Transverse colon (tissue), 4 donors: ENCODE measurements at regions of chr7 and their contacts with region 1.

Region 1: DNA sequence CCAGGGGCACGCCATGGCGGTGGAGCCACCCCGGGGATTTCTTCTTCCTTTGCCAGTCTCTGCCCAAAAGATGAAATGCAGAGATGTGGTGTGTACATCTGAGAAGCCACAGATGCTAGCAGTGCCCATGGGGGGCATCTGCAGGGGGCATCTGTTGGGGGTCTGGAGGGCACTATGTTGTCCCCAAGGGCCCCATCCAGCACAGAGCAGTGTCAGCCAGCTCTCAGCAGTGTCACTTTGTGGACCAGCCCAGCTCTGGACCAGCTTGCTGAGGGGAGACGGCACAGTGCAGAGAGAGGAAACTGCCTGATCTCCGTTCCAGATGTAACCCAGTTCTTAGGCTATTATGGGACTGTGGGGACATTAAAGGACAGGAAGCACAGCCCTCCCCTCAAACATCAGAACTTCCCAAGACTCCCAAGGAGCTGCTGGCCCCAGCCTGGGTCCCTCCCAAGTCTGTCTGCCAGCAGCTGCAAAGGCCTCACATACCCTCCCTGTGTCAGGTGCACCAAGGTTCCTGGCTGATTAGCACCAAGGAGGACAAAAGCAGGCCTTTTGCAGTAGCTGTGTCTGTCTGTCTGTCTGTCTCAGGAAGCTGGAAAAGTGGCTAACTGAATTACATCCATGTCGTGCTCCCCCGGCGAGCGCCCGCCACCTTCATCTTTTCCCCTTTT is 536.5 kb downstream of the PTPRN2 start:
- DNase-seq: no peak
- H3K4me3 ChIP-seq: no peak overlapping the region
- H3K27ac ChIP-seq: no peak overlapping the region
- H3K4me1 ChIP-seq: no peaks in the 10 kb centered on the region
- H3K27me3 ChIP-seq: no peaks in the 10 kb centered on the region
- CTCF ChIP-seq: no peak
- EP300 ChIP-seq: no peak
- POLR2A ChIP-seq: no peak

Region 2: GRCh38 chr7:157961731-157962457 is 89.2 kb before region 1 on chr7:
- in situ Hi-C with region 1: no loop called
- intact Hi-C with region 1: no loop called
- DNase-seq: no peak
- H3K4me3 ChIP-seq: no peak overlapping the region
- H3K27ac ChIP-seq: no peak overlapping the region
- H3K4me1 ChIP-seq: no peaks in the 10 kb centered on the region
- H3K27me3 ChIP-seq: peaks cover 22% of the 10 kb centered on the region
- CTCF ChIP-seq: no peak
- EP300 ChIP-seq: no peak
- POLR2A ChIP-seq: no peak

Region 3: GRCh38 chr7:158010961-158011679 is 40.0 kb before region 1 on chr7:
- in situ Hi-C with region 1: no loop called
- intact Hi-C with region 1: no loop called
- DNase-seq: no peak
- H3K4me3 ChIP-seq: no peak overlapping the region
- H3K27ac ChIP-seq: no peak overlapping the region
- H3K4me1 ChIP-seq: peaks cover 0 to 9% (median 8%) of the 10 kb centered on the region in 4 donors
- H3K27me3 ChIP-seq: no peaks in the 10 kb centered on the region
- CTCF ChIP-seq: no peak
- EP300 ChIP-seq: no peak
- POLR2A ChIP-seq: no peak

Region 4: DNA sequence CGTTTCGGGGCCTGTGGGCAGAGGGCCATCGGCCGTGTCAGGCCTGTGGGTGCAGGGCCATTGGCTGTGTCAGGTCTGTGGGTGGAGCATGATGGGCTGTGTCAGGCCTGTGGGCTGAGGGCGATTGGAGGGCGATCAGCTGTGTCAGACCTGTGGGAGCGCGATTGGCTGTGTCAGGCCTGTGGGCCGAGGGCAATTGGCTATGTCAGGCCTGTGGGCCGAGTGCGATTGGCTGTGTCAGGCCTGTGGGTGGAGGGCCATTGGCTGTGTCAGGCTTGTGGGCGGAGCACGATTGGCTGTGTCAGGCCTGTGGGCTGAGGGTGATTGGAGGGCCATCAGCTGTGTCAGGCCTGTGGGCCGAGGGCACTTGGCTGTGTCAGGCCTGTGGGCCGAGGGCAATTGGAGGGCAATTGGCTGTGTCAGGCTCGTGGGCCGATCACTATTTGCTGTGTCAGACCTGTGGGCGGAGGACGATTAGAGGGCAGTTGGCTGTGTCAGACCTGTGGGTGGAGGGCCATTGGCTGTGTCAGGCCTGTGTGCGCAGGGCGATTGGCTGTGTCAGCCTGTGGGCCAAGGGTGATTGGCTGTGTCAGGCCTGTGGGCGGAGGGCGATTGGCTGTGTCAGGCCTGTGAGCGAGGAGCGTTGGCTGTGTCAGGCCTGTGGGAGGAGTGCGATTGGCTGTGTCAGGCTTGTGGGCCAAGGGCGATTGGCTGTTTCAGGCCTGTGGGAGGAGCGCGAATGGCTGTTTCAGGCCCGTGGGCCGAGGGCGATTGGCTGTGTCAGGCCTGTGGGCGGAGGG is 859.3 kb after region 1 on chr7:
- in situ Hi-C with region 1: no loop called
- intact Hi-C with region 1: loop called (anchors 10 kb)
- DNase-seq: no peak
- H3K4me3 ChIP-seq: no peak overlapping the region
- H3K27ac ChIP-seq: no peak overlapping the region
- H3K4me1 ChIP-seq: no peaks in the 10 kb centered on the region
- H3K27me3 ChIP-seq: no peaks in the 10 kb centered on the region
- CTCF ChIP-seq: no peak
- EP300 ChIP-seq: no peak
- POLR2A ChIP-seq: no peak

Region 5: GRCh38 chr7:158950914-158951635 is 900.0 kb after region 1 on chr7:
- in situ Hi-C with region 1: no loop called
- intact Hi-C with region 1: no loop called
- DNase-seq: no peak
- H3K4me3 ChIP-seq: no peak overlapping the region
- H3K27ac ChIP-seq: no peak overlapping the region
- H3K4me1 ChIP-seq: no peaks in the 10 kb centered on the region
- H3K27me3 ChIP-seq: no peaks in the 10 kb centered on the region
- CTCF ChIP-seq: no peak
- EP300 ChIP-seq: no peak
- POLR2A ChIP-seq: no peak